Activated CD8-positive, alpha-beta T cell treated with anti-CD3 and anti-CD28 coated beads for 36 hours (primary cell): ENCODE measurements at regions of chr7 and their contacts with region 1.

Region 1: DNA sequence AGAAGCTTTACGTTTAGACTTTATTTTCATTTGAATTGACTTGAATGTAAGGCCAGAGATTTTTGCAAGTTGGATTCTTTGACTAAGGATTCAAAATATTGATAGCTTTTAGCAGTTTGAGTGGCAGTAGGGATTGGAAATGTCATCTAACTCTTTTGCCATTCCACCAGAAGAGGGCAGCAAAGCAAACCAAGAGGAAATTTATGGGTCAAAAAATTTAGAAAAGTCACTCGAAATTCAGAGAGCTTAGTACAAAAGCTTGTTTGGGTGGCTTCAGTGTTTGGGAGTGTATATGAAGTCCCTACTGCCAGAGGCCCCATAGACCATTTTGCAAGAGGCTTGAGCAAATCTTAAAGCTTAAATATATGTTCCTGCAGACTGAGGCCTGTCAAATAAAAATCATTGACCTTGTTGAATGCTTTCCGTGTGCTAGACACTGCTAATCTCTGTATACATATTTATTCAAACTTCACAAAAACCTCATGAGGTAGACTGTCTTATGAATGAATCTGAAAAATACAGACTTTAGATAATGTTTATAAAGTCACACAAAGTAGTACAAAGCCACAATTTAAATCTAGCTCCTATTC is 44.6 kb upstream of the RSBN1L start:
- DNase-seq: peak; percentile 46
- ATAC-seq: no peak
- H3K4me3 Mint-ChIP-seq: no peak overlapping the region
- H3K27ac Mint-ChIP-seq: no peak overlapping the region
- H3K4me1 Mint-ChIP-seq: no peaks in the 10 kb centered on the region
- H3K27me3 Mint-ChIP-seq: no peaks in the 10 kb centered on the region
- CTCF ChIP-seq: peak; percentile 77

Region 2: DNA sequence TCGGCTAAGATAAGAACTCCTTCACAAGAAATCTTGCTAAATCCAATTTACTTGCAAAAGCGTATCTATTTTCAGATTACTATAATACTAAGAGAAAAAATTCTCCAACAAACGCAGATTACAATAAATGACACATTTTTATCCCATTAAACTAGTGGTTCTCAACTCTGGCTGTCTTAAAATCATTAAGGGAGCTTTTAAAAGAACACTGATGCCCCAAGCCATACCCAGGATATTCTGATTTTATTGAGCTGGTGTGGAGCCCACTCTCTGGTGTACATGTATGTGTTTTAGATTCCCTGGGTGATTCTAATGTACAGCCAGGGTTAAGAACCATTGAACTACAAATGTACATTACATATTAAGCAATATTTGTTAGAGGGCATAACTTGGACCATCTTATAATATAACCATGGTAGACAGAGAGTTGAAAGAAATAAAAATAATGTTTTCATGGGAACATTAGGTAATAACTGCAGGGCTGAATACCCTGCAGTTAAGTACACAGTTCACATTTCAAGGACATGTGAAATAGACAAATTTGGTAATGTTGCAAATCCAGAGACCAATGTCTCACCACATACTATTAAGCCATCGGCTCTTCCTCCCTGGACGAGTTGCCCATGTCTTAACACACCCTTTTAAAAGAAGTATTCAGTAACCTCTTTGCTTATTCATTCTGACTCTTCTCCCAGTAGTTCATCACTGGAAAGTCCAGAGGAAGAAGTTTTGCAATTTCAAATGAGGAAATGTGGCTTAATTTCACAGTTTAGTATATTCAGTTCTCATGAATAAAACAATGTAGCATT is 241.7 kb before region 1 on chr7:
- CTCF ChIA-PET with region 1: no interaction called
- POLR2A ChIA-PET with region 1: no interaction called
- intact Hi-C with region 1: no loop called
- DNase-seq: no peak
- ATAC-seq: no peak
- H3K4me3 Mint-ChIP-seq: no peak overlapping the region
- H3K27ac Mint-ChIP-seq: no peak overlapping the region
- H3K4me1 Mint-ChIP-seq: peaks cover 15% of the 10 kb centered on the region
- H3K27me3 Mint-ChIP-seq: peaks cover 2% of the 10 kb centered on the region
- CTCF ChIP-seq: no peak

Region 3: GRCh38 chr7:77631820-77632219 is 19.8 kb before region 1 on chr7:
- CTCF ChIA-PET with region 1: interaction called, 12 read pairs
- POLR2A ChIA-PET with region 1: no interaction called
- intact Hi-C with region 1: no loop called
- DNase-seq: no peak
- ATAC-seq: no peak
- H3K4me3 Mint-ChIP-seq: no peak overlapping the region
- H3K27ac Mint-ChIP-seq: no peak overlapping the region
- H3K4me1 Mint-ChIP-seq: peaks cover 3% of the 10 kb centered on the region
- H3K27me3 Mint-ChIP-seq: no peaks in the 10 kb centered on the region
- CTCF ChIP-seq: no peak

Region 4: GRCh38 chr7:77674878-77675277 is 23.2 kb after region 1 on chr7:
- CTCF ChIA-PET with region 1: interaction called, 12 read pairs
- POLR2A ChIA-PET with region 1: no interaction called
- intact Hi-C with region 1: no loop called
- DNase-seq: peak; percentile 31
- ATAC-seq: peak; percentile 62
- H3K4me3 Mint-ChIP-seq: no peak overlapping the region
- H3K27ac Mint-ChIP-seq: no peak overlapping the region
- H3K4me1 Mint-ChIP-seq: peaks cover 1% of the 10 kb centered on the region
- H3K27me3 Mint-ChIP-seq: no peaks in the 10 kb centered on the region
- CTCF ChIP-seq: no peak

Region 5: DNA sequence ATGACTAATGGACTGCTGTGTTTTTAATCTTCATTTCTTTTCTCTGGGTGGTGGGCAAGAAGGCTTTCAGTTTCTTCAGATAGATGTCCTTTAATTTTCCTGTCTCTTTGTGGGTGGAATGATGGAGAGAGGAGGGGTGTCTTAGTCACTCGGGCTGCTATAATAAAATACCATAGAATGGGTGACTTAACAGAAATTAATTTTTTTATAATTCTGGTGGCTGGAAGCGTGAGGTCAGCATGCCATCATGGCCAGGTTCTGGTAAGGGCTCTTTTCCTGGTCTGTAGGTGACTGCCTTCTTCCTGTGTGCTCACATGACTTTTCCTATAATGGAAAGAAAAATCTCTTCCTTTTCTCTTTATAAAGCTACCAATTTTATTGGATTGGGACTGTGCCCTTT is 50.8 kb after region 1 on chr7:
- CTCF ChIA-PET with region 1: interaction called, 26 read pairs
- POLR2A ChIA-PET with region 1: no interaction called
- intact Hi-C with region 1: no loop called
- DNase-seq: no peak
- ATAC-seq: no peak
- H3K4me3 Mint-ChIP-seq: no peak overlapping the region
- H3K27ac Mint-ChIP-seq: peak overlapping the region; percentile 51
- H3K4me1 Mint-ChIP-seq: peaks cover 53% of the 10 kb centered on the region
- H3K27me3 Mint-ChIP-seq: no peaks in the 10 kb centered on the region
- CTCF ChIP-seq: no peak

Region 6: GRCh38 chr7:77759294-77759889 is 107.7 kb after region 1 on chr7:
- CTCF ChIA-PET with region 1: interaction called, 176 read pairs
- POLR2A ChIA-PET with region 1: no interaction called
- intact Hi-C with region 1: loop called (anchors 2 kb)
- DNase-seq: peak; percentile 83
- ATAC-seq: peak; percentile 76
- H3K4me3 Mint-ChIP-seq: no peak overlapping the region
- H3K27ac Mint-ChIP-seq: no peak overlapping the region
- H3K4me1 Mint-ChIP-seq: peaks cover 36% of the 10 kb centered on the region
- H3K27me3 Mint-ChIP-seq: no peaks in the 10 kb centered on the region
- CTCF ChIP-seq: peak; percentile 96

Region 7: GRCh38 chr7:77798394-77799077 is 146.9 kb after region 1 on chr7 and contains the starts of genes PHTF2 and TMEM60:
- CTCF ChIA-PET with region 1: interaction called, 10 read pairs
- POLR2A ChIA-PET with region 1: no interaction called
- intact Hi-C with region 1: no loop called
- DNase-seq: peak; percentile 97
- ATAC-seq: peak; percentile 92
- H3K4me3 Mint-ChIP-seq: peak within 1 kb of the TSS; percentile 89
- H3K27ac Mint-ChIP-seq: peak within 1 kb of the TSS; percentile 94
- H3K4me1 Mint-ChIP-seq: peaks cover 62% of the 10 kb centered on the region
- H3K27me3 Mint-ChIP-seq: no peaks in the 10 kb centered on the region
- CTCF ChIP-seq: peak; percentile 67
- total RNA-seq, gene PHTF2: 25.2 to 25.4 TPM
- total RNA-seq, gene TMEM60: 8.1 to 8.6 TPM

Region 8: DNA sequence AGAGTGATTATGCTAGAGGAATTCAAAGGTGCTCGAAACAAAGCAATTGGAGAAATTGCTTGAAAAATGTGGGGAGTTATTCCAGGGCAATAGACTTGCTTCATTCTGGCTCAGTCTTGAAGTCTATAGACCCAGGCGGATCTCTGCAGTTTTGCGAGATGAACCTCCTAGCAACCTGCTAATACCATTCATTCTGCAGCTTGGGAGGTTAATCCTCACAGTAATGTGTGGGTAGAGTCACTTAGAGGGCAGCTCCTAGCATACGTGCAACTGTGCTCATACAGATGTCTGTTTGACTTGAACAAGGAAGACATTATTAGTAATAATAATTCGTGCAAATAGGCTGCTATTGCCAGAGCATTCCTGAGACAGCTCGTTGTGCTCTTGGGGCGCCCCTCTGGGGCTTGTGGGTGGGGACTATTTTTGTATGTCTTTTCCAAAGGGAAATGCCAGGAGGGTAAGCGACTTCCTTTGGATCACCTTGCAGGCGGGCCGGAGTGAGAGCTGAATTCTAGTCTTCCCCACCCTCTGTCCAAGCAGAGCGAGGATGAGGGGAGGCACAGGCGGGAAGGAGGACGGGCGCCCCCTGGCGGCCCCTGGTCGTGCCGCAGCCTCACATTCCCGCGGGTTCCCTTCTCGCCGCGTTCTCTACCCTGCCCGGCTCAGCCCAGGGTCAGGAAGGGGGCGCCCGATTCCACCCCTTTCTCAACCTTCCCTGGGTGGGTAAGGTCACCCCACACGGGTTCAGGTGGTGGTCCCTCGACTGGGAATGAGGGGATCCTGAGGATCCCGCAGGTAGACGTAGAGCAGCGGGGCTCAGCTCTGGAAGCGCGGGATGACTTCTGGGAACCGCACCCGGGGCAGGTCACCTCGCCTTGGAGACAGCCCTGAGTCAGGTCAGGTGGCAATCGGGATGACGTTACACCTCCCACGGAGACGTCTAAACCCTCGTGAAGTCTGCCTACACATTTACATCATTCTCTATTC is 388.4 kb after region 1 on chr7:
- CTCF ChIA-PET with region 1: interaction called, 38 read pairs
- POLR2A ChIA-PET with region 1: no interaction called
- intact Hi-C with region 1: loop called (anchors 10 kb)
- DNase-seq: peak; percentile 68
- ATAC-seq: peak; percentile 93
- H3K4me3 Mint-ChIP-seq: no peak overlapping the region
- H3K27ac Mint-ChIP-seq: no peak overlapping the region
- H3K4me1 Mint-ChIP-seq: peaks cover 3% of the 10 kb centered on the region
- H3K27me3 Mint-ChIP-seq: peaks cover 20% of the 10 kb centered on the region
- CTCF ChIP-seq: peak; percentile 97